Posterior vena cava (tissue), 2 donors: ENCODE measurements at regions of chr7 and their contacts with region 1.

Region 1: DNA sequence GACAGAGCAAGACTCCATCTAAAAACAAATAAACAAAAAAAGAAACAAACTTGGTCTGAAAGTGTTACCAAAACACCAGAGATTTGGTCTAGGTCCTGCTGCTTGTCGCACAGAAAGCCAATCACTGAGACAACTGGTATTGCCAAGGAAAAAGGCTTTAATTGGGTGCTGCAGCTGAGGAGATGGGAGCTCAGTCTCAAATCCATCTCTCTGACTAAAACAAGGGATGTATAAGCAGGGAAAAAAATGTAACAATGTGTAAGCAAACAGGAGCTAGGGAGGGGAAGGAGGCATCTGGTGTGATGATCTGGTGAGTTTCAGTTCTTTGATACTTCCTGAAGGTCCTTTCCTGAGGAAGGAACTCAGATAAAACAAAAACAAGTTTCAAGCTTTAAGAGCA is 8.4 kb upstream of the PDIA4 start:
- DNase-seq: no peak

Region 2: GRCh38 chr7:148905093-148905666 is 131.5 kb before region 1 on chr7:
- intact Hi-C with region 1: no loop called
- DNase-seq: no peak

Region 3: DNA sequence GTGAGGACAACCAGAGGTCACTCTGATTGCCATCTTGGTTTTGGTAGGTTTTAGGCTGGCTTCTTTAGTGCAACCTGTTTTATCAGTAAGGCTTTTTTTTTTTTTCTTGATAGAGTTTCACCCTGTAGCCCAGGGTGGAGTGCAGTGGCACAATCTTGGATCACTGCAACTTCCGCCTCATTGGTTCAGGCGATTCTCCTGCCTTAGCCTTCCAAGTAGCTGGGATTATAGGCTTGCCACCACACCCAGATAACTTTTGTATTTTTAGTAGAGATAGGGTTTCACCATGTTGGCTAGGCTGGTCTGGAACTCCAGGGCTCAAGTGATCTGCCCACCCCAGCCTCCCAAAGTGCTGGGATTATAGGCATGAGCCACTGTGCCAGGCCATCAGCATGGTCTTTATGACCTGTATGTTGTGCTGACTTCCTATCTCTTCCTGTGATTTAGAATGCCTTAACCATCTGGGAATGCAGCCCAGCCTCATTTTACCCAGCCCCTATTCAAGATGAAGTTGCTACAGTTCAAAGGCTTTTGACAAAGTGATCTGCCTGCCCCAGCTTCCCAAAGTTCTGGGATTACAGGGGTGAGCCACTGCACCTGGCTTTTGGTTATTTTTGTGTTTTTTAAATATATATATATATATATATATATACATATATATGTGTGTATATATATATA is 96.5 kb after region 1 on chr7:
- intact Hi-C with region 1: no loop called
- DNase-seq: no peak

Region 4: DNA sequence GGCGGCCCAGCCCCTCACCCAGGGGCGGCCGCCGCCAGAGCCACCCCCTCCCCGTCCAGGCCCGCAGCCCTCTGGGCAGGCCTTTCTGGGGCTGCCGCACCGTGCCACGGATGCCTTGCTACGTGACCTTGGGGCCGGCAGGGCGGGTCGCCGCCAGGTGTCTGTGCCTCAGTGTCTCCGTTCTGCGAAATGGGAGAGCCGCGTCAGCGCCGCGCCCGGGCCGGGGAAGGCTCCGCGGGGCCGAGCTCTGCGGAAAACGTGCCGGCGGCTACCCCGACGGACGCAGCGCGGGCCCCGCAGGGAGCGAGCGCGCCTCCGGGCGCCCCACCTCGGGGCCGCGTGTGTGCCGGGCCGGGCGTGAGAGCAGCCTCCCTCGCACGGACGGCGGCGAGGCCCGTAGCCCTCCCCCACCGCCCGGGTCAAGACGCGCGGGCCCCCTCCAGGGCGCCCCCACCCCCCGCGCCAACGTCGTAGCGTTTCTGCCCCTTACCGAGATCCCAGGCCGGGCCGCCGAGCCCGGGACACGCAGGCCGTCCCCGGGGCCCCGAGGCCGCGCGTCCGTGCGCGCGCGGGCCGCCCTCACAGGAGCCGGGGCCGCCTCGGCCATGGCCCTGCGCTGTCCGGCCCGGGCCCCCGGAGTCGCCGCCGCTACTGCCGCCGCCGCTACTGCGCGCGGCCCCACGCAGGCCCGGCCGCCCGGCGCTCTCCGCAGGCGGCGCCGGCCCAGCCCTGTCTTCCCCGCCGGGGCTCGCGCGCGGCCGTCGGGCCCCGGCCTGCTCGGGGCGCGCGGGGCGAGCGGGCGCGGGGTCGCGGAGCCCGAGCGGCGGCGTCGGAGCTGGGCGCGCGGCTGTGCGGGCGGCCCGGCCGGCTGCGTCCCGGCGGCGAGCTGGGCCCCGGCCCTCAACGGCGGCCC is 423.1 kb after region 1 on chr7:
- intact Hi-C with region 1: loop called in 1 of 2 experiments (anchors 10 kb)
- DNase-seq: no peak